ENCODE measurements at regions of chr5 and their contacts with region 1.

Region 1: DNA sequence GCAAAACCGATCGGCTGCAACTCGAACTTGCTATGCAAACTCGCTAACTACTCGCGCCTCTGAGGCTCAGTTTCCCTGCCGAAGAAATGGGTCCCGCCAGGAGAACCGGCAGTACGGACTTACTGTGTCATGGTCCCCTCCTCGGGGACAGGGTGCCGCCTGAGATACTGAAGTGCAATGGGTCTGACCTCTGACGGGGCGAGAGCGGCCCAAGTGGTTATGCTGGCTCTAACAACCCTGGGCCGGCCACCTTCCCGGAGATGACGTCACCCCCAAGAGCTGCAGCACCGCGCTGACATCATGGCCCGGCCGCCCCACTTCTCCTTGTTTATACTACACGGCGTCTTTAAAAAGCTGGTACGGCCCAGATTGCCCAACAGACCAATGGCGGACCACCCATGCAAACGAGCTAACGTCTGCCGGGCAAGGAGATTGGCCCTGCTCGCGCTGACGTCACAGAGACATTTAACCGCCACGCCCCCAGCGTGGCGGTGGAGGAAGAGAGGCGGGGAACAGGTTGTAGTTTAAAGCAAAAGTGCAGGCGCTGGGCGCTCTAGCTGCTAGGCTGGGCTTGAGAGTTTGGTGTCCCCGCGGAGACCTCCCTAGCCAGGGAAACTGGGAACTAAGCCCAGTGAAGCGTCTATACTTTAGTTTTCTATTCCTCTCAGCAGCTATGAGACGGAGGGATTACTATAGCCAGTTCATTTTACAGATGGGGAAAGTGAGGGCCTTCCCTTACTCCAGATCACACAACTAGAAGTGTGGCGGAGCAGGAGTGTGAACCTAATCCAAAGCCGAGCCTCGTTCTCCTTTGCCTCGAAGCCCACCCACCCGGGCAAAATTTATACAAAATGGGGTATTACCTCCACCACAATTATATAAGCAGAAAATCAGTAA is 654 bp upstream of the RNF44 start:
- DNase-seq: peak; percentile 84
- ATAC-seq: peak; percentile 73
- H3K4me3 Mint-ChIP-seq: peak overlapping the region; percentile 97
- H3K27ac Mint-ChIP-seq: peak overlapping the region; percentile 95
- H3K4me1 Mint-ChIP-seq: peaks cover 72% of the 10 kb centered on the region
- H3K27me3 Mint-ChIP-seq: no peaks in the 10 kb centered on the region
- CTCF ChIP-seq: no peak

Region 2: GRCh38 chr5:176388444-176389134 is 149.3 kb before region 1 on chr5 and contains the starts of genes HIGD2A and NOP16:
- CTCF ChIA-PET with region 1: no interaction called
- POLR2A ChIA-PET with region 1: interaction called, 10 read pairs
- intact Hi-C with region 1: loop called (anchors 1 kb)
- DNase-seq: peak; percentile 92
- ATAC-seq: peak; percentile 90
- H3K4me3 Mint-ChIP-seq: peak within 1 kb of the TSS; percentile 100
- H3K27ac Mint-ChIP-seq: peak within 1 kb of the TSS; percentile 100
- H3K4me1 Mint-ChIP-seq: peaks cover 30% of the 10 kb centered on the region
- H3K27me3 Mint-ChIP-seq: no peaks in the 10 kb centered on the region
- CTCF ChIP-seq: no peak
- total RNA-seq, gene HIGD2A: 113 and 116 TPM in 2 replicates
- total RNA-seq, gene NOP16: 50.9 and 65.1 TPM in 2 replicates

Region 3: GRCh38 chr5:176447982-176448608 is 89.8 kb before region 1 on chr5 and contains the start of gene FAF2:
- CTCF ChIA-PET with region 1: interaction called, 13 read pairs
- POLR2A ChIA-PET with region 1: interaction called, 53 read pairs
- intact Hi-C with region 1: loop called (anchors 1 kb)
- DNase-seq: peak; percentile 100
- ATAC-seq: peak; percentile 94
- H3K4me3 Mint-ChIP-seq: peak within 1 kb of the TSS; percentile 98
- H3K27ac Mint-ChIP-seq: peak within 1 kb of the TSS; percentile 96
- H3K4me1 Mint-ChIP-seq: peaks cover 32% of the 10 kb centered on the region
- H3K27me3 Mint-ChIP-seq: peaks cover 2% of the 10 kb centered on the region
- CTCF ChIP-seq: peak; percentile 49
- total RNA-seq, gene FAF2: 35.6 and 39.0 TPM in 2 replicates

Region 4: DNA sequence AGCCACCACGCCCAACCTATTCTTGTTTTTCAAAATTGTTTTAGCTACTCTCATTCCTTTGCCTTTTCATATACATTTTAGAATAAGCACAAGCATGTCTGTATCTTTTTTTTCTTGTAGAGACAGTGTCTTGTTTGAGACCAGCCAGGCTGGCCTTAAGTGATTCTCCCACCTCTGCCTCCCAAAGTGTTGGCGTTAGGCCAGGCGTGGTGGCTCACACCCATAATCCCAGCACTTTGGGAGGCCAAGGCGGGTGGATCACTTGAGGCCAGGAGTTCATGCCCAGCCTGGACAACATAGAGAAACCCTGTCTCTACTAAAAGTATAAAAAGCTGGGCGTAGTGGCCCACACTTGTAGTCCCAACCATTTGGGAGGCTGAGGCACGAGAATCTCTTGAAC is 13.7 kb before region 1 on chr5:
- CTCF ChIA-PET with region 1: interaction called, 9 read pairs
- POLR2A ChIA-PET with region 1: interaction called, 13 read pairs
- intact Hi-C with region 1: no loop called
- DNase-seq: no peak
- ATAC-seq: no peak
- H3K4me3 Mint-ChIP-seq: no peak overlapping the region
- H3K27ac Mint-ChIP-seq: no peak overlapping the region
- H3K4me1 Mint-ChIP-seq: peaks cover 25% of the 10 kb centered on the region
- H3K27me3 Mint-ChIP-seq: no peaks in the 10 kb centered on the region
- CTCF ChIP-seq: no peak

Region 5: DNA sequence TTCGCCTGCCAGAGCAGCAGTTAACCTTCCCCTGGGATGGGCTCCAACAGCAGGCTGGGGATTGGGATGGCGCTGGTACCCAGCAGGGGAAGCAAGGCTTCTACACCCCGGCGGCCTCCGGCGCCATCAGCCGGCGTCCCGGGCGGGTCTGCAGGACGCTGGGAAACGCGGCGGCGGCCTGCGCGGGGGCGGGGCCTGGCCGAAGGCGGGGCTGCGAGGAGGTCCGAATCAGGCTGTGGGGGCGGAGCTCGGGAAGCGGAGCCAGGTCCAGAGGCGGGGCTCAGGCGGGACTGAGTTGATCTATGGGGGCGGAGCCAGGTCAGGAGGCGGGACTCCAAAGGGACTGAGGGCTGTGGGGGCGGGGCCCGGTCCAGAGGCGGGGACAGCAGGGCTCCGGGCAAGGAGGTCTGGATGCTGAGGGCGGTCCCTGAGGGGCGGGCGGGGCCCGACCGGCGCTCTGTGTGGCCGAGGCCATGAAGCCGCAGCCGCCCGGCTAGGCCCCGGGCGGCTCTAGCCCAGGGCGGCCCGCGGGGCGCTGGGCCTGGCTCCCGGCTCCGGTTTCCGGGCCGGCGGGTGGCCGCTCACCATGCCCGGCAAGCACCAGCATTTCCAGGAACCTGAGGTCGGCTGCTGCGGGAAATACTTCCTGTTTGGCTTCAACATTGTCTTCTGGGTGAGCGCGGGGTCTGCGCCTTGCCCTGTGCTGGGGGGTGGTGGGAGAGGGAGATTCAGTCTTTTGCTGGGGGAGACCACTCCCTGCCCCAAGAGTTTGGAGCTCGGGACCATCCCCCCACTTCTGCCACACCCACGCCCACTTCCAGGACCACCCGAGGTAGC is 109.4 kb after region 1 on chr5 and contains the start of gene TSPAN17:
- CTCF ChIA-PET with region 1: no interaction called
- POLR2A ChIA-PET with region 1: interaction called, 19 read pairs
- intact Hi-C with region 1: loop called (anchors 2 kb)
- DNase-seq: peak; percentile 99
- ATAC-seq: peak; percentile 97
- H3K4me3 Mint-ChIP-seq: peak within 1 kb of the TSS; percentile 90
- H3K27ac Mint-ChIP-seq: peak within 1 kb of the TSS; percentile 91
- H3K4me1 Mint-ChIP-seq: peaks cover 45% of the 10 kb centered on the region
- H3K27me3 Mint-ChIP-seq: no peaks in the 10 kb centered on the region
- CTCF ChIP-seq: no peak
- total RNA-seq, gene TSPAN17: 20.7 and 27.7 TPM in 2 replicates

Region 6: GRCh38 chr5:176817841-176818377 is 280.1 kb after region 1 on chr5:
- CTCF ChIA-PET with region 1: no interaction called
- POLR2A ChIA-PET with region 1: no interaction called
- intact Hi-C with region 1: no loop called
- DNase-seq: no peak
- ATAC-seq: peak; percentile 25
- H3K4me3 Mint-ChIP-seq: peak overlapping the region; percentile 55
- H3K27ac Mint-ChIP-seq: no peak overlapping the region
- H3K4me1 Mint-ChIP-seq: peaks cover 10% of the 10 kb centered on the region
- H3K27me3 Mint-ChIP-seq: peaks cover 75% of the 10 kb centered on the region
- CTCF ChIP-seq: no peak

Region 7: GRCh38 chr5:177133091-177133852 is 595.4 kb after region 1 on chr5 and contains the start of gene NSD1:
- CTCF ChIA-PET with region 1: no interaction called
- POLR2A ChIA-PET with region 1: interaction called, 3 read pairs
- intact Hi-C with region 1: loop called (anchors 5 kb)
- DNase-seq: peak; percentile 92
- ATAC-seq: peak; percentile 74
- H3K4me3 Mint-ChIP-seq: peak within 1 kb of the TSS; percentile 85
- H3K27ac Mint-ChIP-seq: peak within 1 kb of the TSS; percentile 87
- H3K4me1 Mint-ChIP-seq: peaks cover 52% of the 10 kb centered on the region
- H3K27me3 Mint-ChIP-seq: no peaks in the 10 kb centered on the region
- CTCF ChIP-seq: no peak
- total RNA-seq, gene NSD1: 103 and 108 TPM in 2 replicates

Region 8: GRCh38 chr5:178113199-178113787 is 1575.4 kb after region 1 on chr5 and contains the start of gene N4BP3:
- CTCF ChIA-PET with region 1: no interaction called
- POLR2A ChIA-PET with region 1: no interaction called
- intact Hi-C with region 1: loop called (anchors 10 kb)
- DNase-seq: peak; percentile 92
- ATAC-seq: peak; percentile 70
- H3K4me3 Mint-ChIP-seq: peak within 1 kb of the TSS; percentile 98
- H3K27ac Mint-ChIP-seq: peak within 1 kb of the TSS; percentile 94
- H3K4me1 Mint-ChIP-seq: peaks cover 65% of the 10 kb centered on the region
- H3K27me3 Mint-ChIP-seq: no peaks in the 10 kb centered on the region
- CTCF ChIP-seq: no peak
- total RNA-seq, gene N4BP3: 17.4 and 18.1 TPM in 2 replicates